Colonic mucosa (tissue), 4 donors: ENCODE measurements at regions of chr6 and their contacts with region 1.

Region 1: GRCh38 chr6:137313928-137314855 is 95.0 kb upstream of the IFNGR1 start:
- DNase-seq: peak; percentile 74
- H3K4me3 ChIP-seq: no peak overlapping the region
- H3K27ac ChIP-seq: no peak overlapping the region
- H3K4me1 ChIP-seq: peaks cover 10% of the 10 kb centered on the region
- H3K27me3 ChIP-seq: no peaks in the 10 kb centered on the region
- CTCF ChIP-seq: peak; percentile 72

Region 2: DNA sequence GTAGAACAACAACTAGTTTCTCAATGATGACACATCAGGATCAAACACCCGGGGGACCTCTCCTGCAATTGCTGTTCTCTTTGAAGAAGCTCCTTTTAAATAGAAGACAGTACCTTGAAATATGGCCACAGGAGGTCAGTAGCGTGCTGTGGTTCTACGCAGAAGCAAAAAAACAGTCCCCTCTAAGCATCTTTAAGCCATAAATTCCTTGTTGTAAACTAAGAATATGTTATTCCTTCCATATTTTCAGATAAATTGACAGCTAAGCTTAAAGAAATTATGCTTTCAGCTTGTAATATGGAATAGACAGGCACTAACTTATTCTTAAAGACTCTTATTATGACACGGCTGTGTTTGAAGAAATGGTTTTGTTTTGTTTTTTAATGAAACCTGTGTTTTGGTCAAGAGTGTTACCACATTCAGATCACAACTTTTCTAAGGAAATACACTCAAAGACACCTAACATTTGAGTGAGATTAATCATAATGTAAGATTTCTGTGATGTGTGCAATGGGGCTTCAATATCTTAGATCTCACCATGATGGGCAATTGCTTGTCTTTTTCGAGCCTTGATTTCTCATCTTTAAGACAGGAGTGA is 219.7 kb before region 1 on chr6:
- intact Hi-C with region 1: loop called (anchors 5 kb)
- DNase-seq: peak; percentile 66
- H3K4me3 ChIP-seq: no peak overlapping the region
- H3K27ac ChIP-seq: no peak overlapping the region
- H3K4me1 ChIP-seq: no peaks in the 10 kb centered on the region
- H3K27me3 ChIP-seq: no peaks in the 10 kb centered on the region
- CTCF ChIP-seq: peak; percentile 52

Region 3: DNA sequence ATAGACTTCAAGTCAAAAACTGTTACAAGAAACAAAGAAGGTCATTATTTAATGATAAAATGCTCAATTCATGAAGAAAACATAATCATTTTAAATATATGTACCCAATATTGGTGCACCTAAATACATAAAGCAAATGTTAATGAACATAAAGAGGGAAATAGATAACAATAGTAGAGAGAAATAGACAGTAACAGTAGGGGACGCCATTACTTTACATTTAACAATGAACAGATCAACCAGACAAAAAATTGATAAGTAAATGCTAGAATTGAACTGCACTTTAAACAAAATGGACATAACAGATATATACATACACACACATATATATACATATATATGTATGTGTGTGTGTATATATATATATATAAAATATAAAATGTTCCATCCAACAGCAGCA is 178.1 kb before region 1 on chr6:
- intact Hi-C with region 1: loop called (anchors 5 kb)
- DNase-seq: no peak
- H3K4me3 ChIP-seq: no peak overlapping the region
- H3K27ac ChIP-seq: no peak overlapping the region
- H3K4me1 ChIP-seq: no peaks in the 10 kb centered on the region
- H3K27me3 ChIP-seq: no peaks in the 10 kb centered on the region
- CTCF ChIP-seq: peak; percentile 17

Region 4: DNA sequence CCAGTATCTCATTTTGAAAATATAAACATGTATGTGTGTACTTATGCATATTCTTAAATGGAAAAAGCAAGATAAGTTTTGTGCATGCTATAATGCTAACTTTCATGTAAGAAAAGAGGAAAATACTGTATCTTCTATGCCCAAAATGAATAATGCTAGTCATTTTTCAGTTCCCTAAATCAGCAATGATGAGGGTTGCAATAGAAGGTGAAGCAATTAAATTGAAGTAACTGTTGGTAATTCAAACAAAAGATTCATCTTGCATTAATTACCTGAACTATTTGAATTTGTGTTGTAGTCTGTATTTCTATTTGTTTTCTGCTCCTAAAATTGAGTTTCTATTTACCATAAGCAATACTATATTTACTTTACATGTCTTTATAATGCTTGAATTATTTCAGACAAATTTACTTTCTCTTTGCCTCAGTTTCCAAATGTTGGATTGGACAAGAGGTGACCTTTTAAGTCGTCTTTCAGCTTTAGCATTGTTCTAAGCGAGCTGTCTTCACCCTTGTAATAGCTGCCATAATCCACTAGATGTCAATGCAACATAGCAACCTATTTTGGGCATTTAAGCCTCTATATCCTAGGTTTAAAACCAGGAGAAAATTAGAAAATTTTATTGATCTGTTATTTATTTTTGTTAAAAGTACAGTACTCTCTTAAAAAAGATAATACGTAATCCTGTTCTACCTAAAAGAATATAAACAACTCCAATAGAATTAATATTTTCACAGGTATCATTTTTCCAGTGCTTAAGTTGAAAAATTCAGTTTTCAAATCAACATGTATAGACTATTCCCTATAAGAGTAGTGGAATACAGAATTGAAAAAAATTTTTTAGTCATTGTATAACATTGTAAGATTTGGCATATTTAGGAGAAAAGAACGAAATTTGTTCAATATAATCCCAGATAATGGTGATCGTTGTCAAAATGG is 42.7 kb before region 1 on chr6:
- intact Hi-C with region 1: loop called (anchors 2 kb)
- DNase-seq: no peak
- H3K4me3 ChIP-seq: no peak overlapping the region
- H3K27ac ChIP-seq: no peak overlapping the region
- H3K4me1 ChIP-seq: no peaks in the 10 kb centered on the region
- H3K27me3 ChIP-seq: no peaks in the 10 kb centered on the region
- CTCF ChIP-seq: peak; percentile 87